ENCODE measurements at regions of chr16 and their contacts with region 1.

Region 1: GRCh38 chr16:88437373-88437964 is 15.6 kb upstream of the ZFPM1 start:
- DNase-seq: peak; percentile 83
- ATAC-seq: peak; percentile 65
- H3K4me3 ChIP-seq: no peak overlapping the region
- H3K27ac ChIP-seq: no peak overlapping the region
- H3K4me1 ChIP-seq: no peaks in the 10 kb centered on the region
- H3K27me3 ChIP-seq: no peaks in the 10 kb centered on the region
- CTCF ChIP-seq: peak; percentile 87

Region 2: DNA sequence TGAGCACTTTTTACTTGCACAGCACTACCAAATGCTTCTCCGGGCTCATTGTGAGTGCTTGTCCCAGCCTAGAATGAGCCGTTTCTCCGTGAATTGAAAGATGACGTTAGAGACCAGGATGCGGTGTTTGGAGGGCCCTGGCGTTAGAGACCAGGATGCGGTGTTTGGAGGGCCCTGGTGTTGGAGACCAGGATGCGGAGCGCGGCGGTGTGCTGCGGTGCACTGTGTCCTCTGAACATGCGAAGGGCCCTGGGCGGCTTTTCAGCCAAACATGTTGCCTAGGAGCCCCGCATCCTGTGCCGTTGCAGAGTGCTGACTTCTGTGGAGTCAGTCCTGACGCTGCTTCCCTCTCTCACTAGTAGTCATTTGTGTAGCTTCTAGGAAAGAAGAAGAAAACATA is 443.6 kb before region 1 on chr16:
- intact Hi-C with region 1: loop called (anchors 10 kb)
- DNase-seq: no peak
- ATAC-seq: peak; percentile 41
- H3K4me3 ChIP-seq: no peak overlapping the region
- H3K27ac ChIP-seq: no peak overlapping the region
- H3K4me1 ChIP-seq: no peaks in the 10 kb centered on the region
- H3K27me3 ChIP-seq: no peaks in the 10 kb centered on the region
- CTCF ChIP-seq: no peak

Region 3: GRCh38 chr16:88194397-88195268 is 242.8 kb before region 1 on chr16:
- intact Hi-C with region 1: loop called (anchors 10 kb)
- DNase-seq: peak; percentile 62
- ATAC-seq: peak; percentile 32
- H3K4me3 ChIP-seq: no peak overlapping the region
- H3K27ac ChIP-seq: peak overlapping the region; percentile 17
- H3K4me1 ChIP-seq: no peaks in the 10 kb centered on the region
- H3K27me3 ChIP-seq: no peaks in the 10 kb centered on the region
- CTCF ChIP-seq: no peak